PC-9 (cell line): ENCODE measurements at regions of chr6 and their contacts with region 1.

Region 1: GRCh38 chr6:90787446-90787845 is 200.6 kb upstream of the MAP3K7 start:
- DNase-seq: no peak
- H3K4me3 ChIP-seq: no peak overlapping the region
- H3K27ac ChIP-seq: no peak overlapping the region
- H3K4me1 ChIP-seq: no peaks in the 10 kb centered on the region
- H3K27me3 ChIP-seq: no peaks in the 10 kb centered on the region
- CTCF ChIP-seq: no peak

Region 2: GRCh38 chr6:90039911-90040310 is 747.5 kb before region 1 on chr6:
- CTCF ChIA-PET with region 1: no interaction called
- POLR2A ChIA-PET with region 1: no interaction called
- intact Hi-C with region 1: no loop called
- DNase-seq: no peak
- H3K4me3 ChIP-seq: no peak overlapping the region
- H3K27ac ChIP-seq: no peak overlapping the region
- H3K4me1 ChIP-seq: no peaks in the 10 kb centered on the region
- H3K27me3 ChIP-seq: no peaks in the 10 kb centered on the region
- CTCF ChIP-seq: no peak

Region 3: DNA sequence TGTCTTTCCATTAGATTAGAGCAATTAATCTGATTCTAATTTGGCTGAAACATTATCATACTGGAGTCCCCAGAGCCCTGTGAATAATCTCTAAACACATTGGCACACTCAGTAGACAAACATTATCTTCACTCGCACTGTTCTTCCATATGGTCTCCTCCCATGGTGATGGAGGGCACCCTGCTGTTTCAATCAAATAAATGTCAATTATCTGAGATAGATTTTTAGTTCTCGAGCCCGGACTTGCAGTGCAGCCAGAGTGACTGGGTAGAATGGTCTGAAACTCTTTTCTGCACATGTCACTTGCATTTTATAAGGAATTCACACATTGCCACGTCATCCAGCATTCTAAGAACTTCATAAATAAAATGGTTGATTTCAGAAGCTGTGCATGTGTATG is 110.0 kb before region 1 on chr6:
- CTCF ChIA-PET with region 1: no interaction called
- POLR2A ChIA-PET with region 1: no interaction called
- intact Hi-C with region 1: no loop called
- DNase-seq: no peak
- H3K4me3 ChIP-seq: no peak overlapping the region
- H3K27ac ChIP-seq: no peak overlapping the region
- H3K4me1 ChIP-seq: no peaks in the 10 kb centered on the region
- H3K27me3 ChIP-seq: peaks cover 14% of the 10 kb centered on the region; the same call in 1 of the 2 replicates
- CTCF ChIP-seq: no peak

Region 4: GRCh38 chr6:90770778-90771177 is 16.7 kb before region 1 on chr6:
- CTCF ChIA-PET with region 1: no interaction called
- POLR2A ChIA-PET with region 1: no interaction called
- intact Hi-C with region 1: no loop called
- DNase-seq: no peak
- H3K4me3 ChIP-seq: no peak overlapping the region
- H3K27ac ChIP-seq: no peak overlapping the region
- H3K4me1 ChIP-seq: no peaks in the 10 kb centered on the region
- H3K27me3 ChIP-seq: no peaks in the 10 kb centered on the region
- CTCF ChIP-seq: no peak

Region 5: GRCh38 chr6:91185072-91185471 is 397.6 kb after region 1 on chr6:
- CTCF ChIA-PET with region 1: no interaction called
- POLR2A ChIA-PET with region 1: interaction called, 11 read pairs
- intact Hi-C with region 1: no loop called
- DNase-seq: no peak
- H3K4me3 ChIP-seq: no peak overlapping the region
- H3K27ac ChIP-seq: no peak overlapping the region
- H3K4me1 ChIP-seq: no peaks in the 10 kb centered on the region
- H3K27me3 ChIP-seq: no peaks in the 10 kb centered on the region
- CTCF ChIP-seq: no peak